Activated T-helper 1 cell treated with anti-CD3 and anti-CD28 coated beads, Interleukin-12 subunit alpha, Interleukin-12 subunit beta, Interleukin-2, Interleukin-4 antibody, amounts not matched to agents 30 ng/mL and 10 ng/mL and 1 ng/mL, durations not matched to agents 14 hours and 24 hours and 36 hours (primary cell): ENCODE measurements at regions of chr10 and their contacts with region 1.

Region 1: GRCh38 chr10:53508197-53508596 is 735.6 kb upstream of the MBL2 start:
- DNase-seq: no peak
- H3K4me3 Mint-ChIP-seq: no peak overlapping the region
- H3K27ac Mint-ChIP-seq: no peak overlapping the region
- H3K4me1 Mint-ChIP-seq: no peaks in the 10 kb centered on the region
- H3K27me3 Mint-ChIP-seq: no peaks in the 10 kb centered on the region

Region 2: GRCh38 chr10:53361281-53361680 is 146.9 kb before region 1 on chr10:
- intact Hi-C with region 1: loop called (anchors 5 kb)
- DNase-seq: no peak
- H3K4me3 Mint-ChIP-seq: no peak overlapping the region
- H3K27ac Mint-ChIP-seq: no peak overlapping the region
- H3K4me1 Mint-ChIP-seq: no peaks in the 10 kb centered on the region
- H3K27me3 Mint-ChIP-seq: no peaks in the 10 kb centered on the region